Activated naive CD4-positive, alpha-beta T cell treated with anti-CD3 and anti-CD28 coated beads for 36 hours (primary cell): ENCODE measurements at regions of chr2 and their contacts with region 1.

Region 1: GRCh38 chr2:127387655-127388422 is at the start of gene MAP3K2:
- DNase-seq: peak; percentile 92
- H3K4me3 Mint-ChIP-seq: peak within 1 kb of the TSS; percentile 85
- H3K27ac Mint-ChIP-seq: peak within 1 kb of the TSS; percentile 92
- H3K4me1 Mint-ChIP-seq: peaks cover 69% of the 10 kb centered on the region
- H3K27me3 Mint-ChIP-seq: no peaks in the 10 kb centered on the region
- total RNA-seq, gene MAP3K2: 27.1 to 27.4 TPM

Region 2: DNA sequence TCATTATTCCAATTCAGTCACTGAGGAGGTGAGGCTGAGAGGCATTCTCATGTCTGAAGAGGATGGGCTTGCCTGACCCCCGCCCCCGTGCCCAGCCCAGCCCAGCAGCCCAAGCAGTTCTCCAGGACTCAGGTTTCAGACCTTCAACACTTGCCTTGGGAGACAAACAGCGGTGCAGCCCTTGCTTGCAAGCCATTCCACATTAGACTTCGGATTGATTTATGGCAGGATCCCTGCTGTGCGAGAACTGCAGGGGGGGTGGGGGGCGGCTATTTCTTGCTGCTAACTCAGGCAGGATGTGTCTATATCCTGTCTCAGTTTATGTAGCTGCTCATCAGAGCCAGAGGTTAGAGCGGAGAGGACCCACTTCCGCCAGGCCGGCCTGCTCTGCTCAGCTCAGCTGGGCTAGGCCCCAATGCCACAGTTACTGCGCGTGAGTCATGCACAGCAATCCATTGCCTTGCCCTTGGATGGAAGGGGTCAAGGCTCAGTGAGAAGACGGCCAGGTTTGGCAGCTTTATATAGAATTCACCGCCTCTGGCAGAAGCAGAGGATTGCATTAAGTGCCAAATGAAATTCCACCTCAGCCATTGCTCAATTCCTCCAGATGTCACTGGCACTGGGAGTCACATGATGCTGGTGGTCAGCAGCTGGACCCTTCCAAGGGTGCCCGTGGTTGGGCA is 730.1 kb before region 1 on chr2:
- CTCF ChIA-PET with region 1: no interaction called
- intact Hi-C with region 1: loop called (anchors 5 kb)
- DNase-seq: peak; percentile 87
- H3K4me3 Mint-ChIP-seq: peak overlapping the region; percentile 100
- H3K27ac Mint-ChIP-seq: peak overlapping the region; percentile 100
- H3K4me1 Mint-ChIP-seq: peaks cover 61% of the 10 kb centered on the region
- H3K27me3 Mint-ChIP-seq: no peaks in the 10 kb centered on the region

Region 3: GRCh38 chr2:127106951-127107621 is 280.8 kb before region 1 on chr2 and contains the start of gene BIN1:
- CTCF ChIA-PET with region 1: no interaction called
- intact Hi-C with region 1: loop called (anchors 2 kb)
- DNase-seq: peak; percentile 83
- H3K4me3 Mint-ChIP-seq: peak within 1 kb of the TSS; percentile 72
- H3K27ac Mint-ChIP-seq: no peak within 1 kb of the TSS
- H3K4me1 Mint-ChIP-seq: peaks cover 3% of the 10 kb centered on the region
- H3K27me3 Mint-ChIP-seq: peaks cover 9% of the 10 kb centered on the region
- total RNA-seq, gene BIN1: 50.4 to 51.1 TPM

Region 4: DNA sequence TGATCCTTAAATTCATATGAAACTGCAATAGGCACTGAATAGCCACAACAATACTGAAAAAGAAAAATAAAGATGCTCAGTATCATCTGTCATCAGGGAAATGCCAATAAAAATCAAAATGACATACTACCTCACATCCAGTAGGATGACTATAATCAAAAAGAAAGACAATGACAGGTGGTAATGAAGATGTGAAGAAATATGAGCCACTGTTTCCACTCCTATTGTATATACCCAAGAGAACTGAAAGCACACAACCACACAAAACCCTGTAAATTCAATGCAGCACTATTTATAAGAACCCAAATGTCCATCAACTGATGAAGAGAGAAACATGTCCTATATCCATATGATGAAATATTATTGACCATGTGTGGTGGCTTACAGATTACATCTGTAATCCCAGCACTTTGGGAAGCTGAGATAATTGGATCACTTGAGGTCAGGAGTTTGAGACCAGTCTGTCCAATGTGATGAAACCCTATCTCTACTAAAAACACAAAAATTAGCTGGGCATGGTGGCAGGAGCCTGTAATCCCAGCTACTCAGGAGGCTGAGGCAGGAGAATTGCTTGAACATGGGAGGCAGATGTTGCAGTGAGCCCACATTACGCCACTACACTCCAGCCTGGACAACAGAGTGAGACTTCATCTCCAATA is 40.0 kb before region 1 on chr2:
- CTCF ChIA-PET with region 1: no interaction called
- intact Hi-C with region 1: loop called (anchors 1 kb)
- DNase-seq: no peak
- H3K4me3 Mint-ChIP-seq: no peak overlapping the region
- H3K27ac Mint-ChIP-seq: no peak overlapping the region
- H3K4me1 Mint-ChIP-seq: peaks cover 55% of the 10 kb centered on the region
- H3K27me3 Mint-ChIP-seq: no peaks in the 10 kb centered on the region